Activated CD4-positive, alpha-beta memory T cell treated with anti-CD3 and anti-CD28 coated beads for 36 hours (primary cell): ENCODE measurements at regions of chr6 and their contacts with region 1.

Region 1: GRCh38 chr6:123802697-123803496 is 768 bp upstream of the NKAIN2 start:
- DNase-seq: peak; percentile 77
- H3K4me3 Mint-ChIP-seq: peak overlapping the region; percentile 45
- H3K27ac Mint-ChIP-seq: no peak overlapping the region
- H3K4me1 Mint-ChIP-seq: peaks cover 11% of the 10 kb centered on the region
- H3K27me3 Mint-ChIP-seq: peaks cover 39% of the 10 kb centered on the region

Region 2: DNA sequence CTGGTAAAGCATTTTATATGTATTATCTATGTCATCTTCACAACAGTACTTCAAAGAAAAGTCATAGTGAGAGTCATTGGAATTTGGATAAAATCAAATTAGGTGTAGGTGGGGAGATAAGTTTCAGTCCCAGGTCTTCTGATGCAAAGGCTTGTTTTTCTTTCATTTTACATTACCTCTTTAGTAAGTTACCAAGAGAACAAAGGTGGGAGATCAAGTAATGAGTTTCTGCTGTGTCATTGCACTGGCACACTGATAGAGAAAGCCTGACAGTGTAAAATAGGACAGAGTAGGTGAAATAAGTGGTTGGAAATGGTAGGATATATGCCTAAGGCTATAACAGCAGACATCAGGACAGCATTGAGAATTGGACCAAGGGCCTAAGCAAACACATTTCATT is 251.1 kb after region 1 on chr6:
- CTCF ChIA-PET with region 1: no interaction called
- POLR2A ChIA-PET with region 1: no interaction called
- intact Hi-C with region 1: no loop called
- DNase-seq: no peak
- H3K4me3 Mint-ChIP-seq: no peak overlapping the region
- H3K27ac Mint-ChIP-seq: no peak overlapping the region
- H3K4me1 Mint-ChIP-seq: no peaks in the 10 kb centered on the region
- H3K27me3 Mint-ChIP-seq: no peaks in the 10 kb centered on the region

Region 3: DNA sequence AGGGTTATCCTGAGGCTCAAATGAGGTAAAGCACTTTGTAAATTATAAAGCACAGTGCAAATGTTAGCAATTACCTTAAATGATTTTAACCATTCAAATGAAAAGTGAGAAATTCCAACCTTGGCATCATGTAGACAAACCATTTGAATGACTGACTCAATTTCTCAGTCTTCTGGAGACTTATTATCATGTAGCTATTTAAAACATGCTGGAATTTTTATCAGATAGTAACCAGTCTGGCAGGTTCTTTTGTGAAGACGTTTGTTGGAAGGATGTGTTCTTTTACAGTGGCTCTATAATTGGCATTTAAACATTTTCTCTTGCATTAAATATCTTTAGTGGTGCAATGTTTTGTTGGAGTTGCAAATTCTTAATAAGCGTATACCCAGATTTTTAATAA is 387.4 kb after region 1 on chr6:
- CTCF ChIA-PET with region 1: no interaction called
- POLR2A ChIA-PET with region 1: no interaction called
- intact Hi-C with region 1: no loop called
- DNase-seq: no peak
- H3K4me3 Mint-ChIP-seq: no peak overlapping the region
- H3K27ac Mint-ChIP-seq: no peak overlapping the region
- H3K4me1 Mint-ChIP-seq: no peaks in the 10 kb centered on the region
- H3K27me3 Mint-ChIP-seq: no peaks in the 10 kb centered on the region

Region 4: DNA sequence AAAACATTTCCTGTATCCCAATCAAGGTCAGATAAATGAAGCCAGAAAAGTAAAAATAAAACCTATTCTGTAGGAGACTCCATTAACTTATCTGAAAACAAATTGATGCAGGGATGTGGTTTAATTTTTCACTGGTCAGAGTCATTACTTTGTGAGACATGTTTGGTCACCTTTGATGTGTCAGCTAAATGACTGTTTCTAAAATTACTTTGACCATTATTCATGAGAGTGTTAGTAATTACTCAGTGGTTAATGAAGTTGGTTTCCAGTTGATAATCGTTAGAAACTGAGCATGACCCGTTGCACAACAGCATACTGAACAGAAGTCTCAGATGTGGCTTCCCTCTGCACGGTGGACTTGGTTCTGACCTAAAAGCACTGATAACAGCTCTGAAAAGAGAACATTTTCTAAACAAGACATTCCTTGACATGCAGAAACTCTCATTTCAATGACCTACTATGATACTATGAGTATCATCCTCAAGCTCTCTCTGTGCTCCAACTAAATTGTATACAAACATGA is 748.9 kb after region 1 on chr6:
- CTCF ChIA-PET with region 1: no interaction called
- POLR2A ChIA-PET with region 1: no interaction called
- intact Hi-C with region 1: loop called (anchors 5 kb)
- DNase-seq: no peak
- H3K4me3 Mint-ChIP-seq: no peak overlapping the region
- H3K27ac Mint-ChIP-seq: no peak overlapping the region
- H3K4me1 Mint-ChIP-seq: no peaks in the 10 kb centered on the region
- H3K27me3 Mint-ChIP-seq: no peaks in the 10 kb centered on the region

Region 5: GRCh38 chr6:124795643-124796463 is 993.0 kb after region 1 on chr6:
- CTCF ChIA-PET with region 1: no interaction called
- POLR2A ChIA-PET with region 1: no interaction called
- intact Hi-C with region 1: loop called (anchors 2 kb)
- DNase-seq: peak; percentile 9
- H3K4me3 Mint-ChIP-seq: no peak overlapping the region
- H3K27ac Mint-ChIP-seq: no peak overlapping the region
- H3K4me1 Mint-ChIP-seq: no peaks in the 10 kb centered on the region
- H3K27me3 Mint-ChIP-seq: no peaks in the 10 kb centered on the region

Region 6: DNA sequence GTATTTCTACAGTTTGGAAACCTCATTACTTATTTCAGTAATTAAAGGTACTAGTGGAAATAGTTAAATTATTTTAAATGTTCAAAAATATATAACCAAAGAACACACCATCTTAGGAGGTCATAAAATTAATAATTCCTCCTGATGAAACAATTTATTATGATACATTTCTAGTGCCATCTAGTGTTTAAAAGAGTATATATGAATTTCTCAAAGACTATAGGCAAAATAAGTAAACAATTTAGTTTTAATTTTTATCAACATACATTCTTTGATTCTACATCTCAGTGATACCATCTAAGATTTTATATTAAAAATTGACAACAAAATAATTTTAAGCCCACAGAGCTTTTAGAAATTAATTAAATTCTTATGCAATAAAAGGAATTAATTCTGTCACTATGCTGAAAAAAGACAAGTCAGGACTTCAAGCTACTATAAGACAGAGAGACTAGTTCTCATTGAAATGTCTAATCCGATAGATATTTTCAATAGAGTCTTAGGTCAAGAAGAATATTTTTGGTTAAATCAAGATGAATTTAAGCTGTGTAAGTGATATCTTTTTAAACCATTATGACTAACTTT is 1051.5 kb after region 1 on chr6:
- CTCF ChIA-PET with region 1: interaction called, 5 read pairs
- POLR2A ChIA-PET with region 1: no interaction called
- intact Hi-C with region 1: loop called (anchors 2 kb)
- DNase-seq: no peak
- H3K4me3 Mint-ChIP-seq: no peak overlapping the region
- H3K27ac Mint-ChIP-seq: no peak overlapping the region
- H3K4me1 Mint-ChIP-seq: no peaks in the 10 kb centered on the region
- H3K27me3 Mint-ChIP-seq: peaks cover 1% of the 10 kb centered on the region

Region 7: GRCh38 chr6:125114248-125114858 is 1311.5 kb after region 1 on chr6:
- CTCF ChIA-PET with region 1: no interaction called
- POLR2A ChIA-PET with region 1: no interaction called
- intact Hi-C with region 1: loop called (anchors 5 kb)
- DNase-seq: peak; percentile 49
- H3K4me3 Mint-ChIP-seq: no peak overlapping the region
- H3K27ac Mint-ChIP-seq: no peak overlapping the region
- H3K4me1 Mint-ChIP-seq: no peaks in the 10 kb centered on the region
- H3K27me3 Mint-ChIP-seq: no peaks in the 10 kb centered on the region